ENCODE measurements at regions of chr1 and their contacts with region 1.

Region 1: DNA sequence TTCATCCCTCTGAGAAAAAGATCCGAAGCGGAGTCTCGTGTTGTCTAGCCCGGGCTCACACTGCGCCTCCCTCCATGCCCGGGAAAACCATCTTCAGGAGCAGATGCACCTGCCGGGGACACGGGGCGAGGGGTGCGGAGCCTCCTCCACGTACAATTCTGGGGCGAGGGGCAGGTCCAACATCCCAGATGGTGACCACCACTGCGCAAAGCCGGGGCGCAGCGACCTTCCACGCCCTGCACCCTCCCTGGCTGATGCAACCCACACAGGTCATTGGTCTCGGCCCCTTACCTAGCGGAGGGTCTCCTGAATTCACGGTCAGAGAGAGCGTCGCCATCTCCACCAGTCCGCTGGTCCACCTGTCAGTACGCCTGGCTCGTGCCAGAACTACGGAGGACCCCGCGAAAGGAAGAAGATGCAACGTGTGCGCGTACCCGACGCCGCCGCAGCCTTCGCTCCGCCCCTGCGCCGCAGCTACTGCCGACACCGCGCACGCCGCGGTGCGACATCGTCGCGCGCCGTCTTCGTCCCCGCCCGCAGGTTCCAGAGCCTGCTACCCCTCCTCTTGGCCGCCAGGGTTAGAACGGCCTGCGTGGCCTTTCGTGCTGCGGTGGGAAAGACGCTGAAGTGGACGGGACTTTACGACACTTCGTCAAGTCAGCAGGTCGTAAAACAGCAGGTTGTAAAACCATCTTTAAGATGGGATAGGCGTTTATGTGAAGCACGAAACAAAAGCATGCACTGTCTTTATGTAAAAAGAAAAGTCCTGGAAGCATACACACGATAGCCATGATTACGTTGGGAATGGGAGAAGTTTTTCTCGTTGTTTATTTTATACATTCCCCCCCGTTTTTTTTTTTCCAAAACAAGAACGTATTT is at the start of gene EPRS1:
- DNase-seq: peak; percentile 94 to 95
- H3K4me3 ChIP-seq: peak within 1 kb of the TSS; percentile 61 to 91 (median 79)
- H3K27ac ChIP-seq: peak within 1 kb of the TSS; percentile 63 to 78 (median 73)
- H3K4me1 ChIP-seq: peaks cover 4 to 13% of the 10 kb centered on the region in 2 donors
- H3K27me3 ChIP-seq: no peaks in the 10 kb centered on the region
- CTCF ChIP-seq: peak; percentile 71 to 93 (median 79)
- POLR2A ChIP-seq: peak in 1 of 2 donors; percentile 84
- total RNA-seq, gene EPRS1: 43.7 to 63.1 (median 54.8) TPM

Region 2: DNA sequence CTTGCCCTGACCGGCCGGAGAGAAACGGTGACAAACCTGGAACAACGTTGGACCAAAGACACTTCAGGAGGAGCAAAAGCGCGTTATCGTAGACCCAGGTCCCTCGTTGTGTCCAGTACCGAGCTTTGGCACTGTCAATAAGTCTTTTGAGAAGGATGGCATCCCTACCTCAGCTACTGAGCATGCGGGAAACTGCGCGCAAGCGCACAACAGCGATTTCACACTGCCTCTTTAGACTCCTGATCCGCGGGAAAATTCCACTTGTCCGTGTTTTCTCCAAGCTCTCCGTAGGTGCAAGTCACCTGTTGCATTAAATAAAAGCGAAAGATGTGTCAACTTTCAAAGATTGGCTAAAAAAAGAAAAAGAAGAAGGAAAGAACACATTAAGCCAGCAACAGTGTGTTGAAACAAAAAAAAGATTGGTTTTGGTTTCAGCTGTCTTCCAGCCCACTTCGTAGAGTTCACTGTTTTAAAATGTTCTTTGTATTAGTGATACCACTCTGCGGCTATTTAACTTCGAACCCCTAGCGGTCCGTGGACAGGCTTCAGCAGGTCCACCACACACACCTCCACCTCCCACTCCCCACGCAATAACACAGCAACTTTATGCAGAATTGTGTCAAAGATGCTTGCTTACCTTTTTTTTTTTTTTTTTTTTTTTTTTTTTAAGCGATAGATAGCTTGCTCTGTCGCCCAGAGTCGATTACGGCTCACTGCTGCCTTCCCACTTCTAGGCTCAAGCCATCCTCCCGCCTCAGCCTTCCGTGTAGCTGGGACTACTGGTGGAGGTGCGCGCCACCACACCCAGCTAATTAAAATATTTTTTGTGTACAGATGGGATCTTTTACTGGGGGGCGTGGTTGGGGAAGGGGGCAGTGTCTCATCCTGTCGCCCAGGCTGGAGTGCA is 43.6 kb after region 1 on chr1 and contains the start of gene BPNT1:
- intact Hi-C with region 1: loop called (anchors 10 kb)
- DNase-seq: peak; percentile 96 to 98
- H3K4me3 ChIP-seq: peak within 1 kb of the TSS; percentile 18 to 42 (median 29)
- H3K27ac ChIP-seq: peak within 1 kb of the TSS in 2 of 3 donors; percentile 53 to 57
- H3K4me1 ChIP-seq: peaks cover 3 to 5% of the 10 kb centered on the region in 2 donors
- H3K27me3 ChIP-seq: no peaks in the 10 kb centered on the region
- CTCF ChIP-seq: no peak
- POLR2A ChIP-seq: peak in 1 of 2 donors; percentile 82
- total RNA-seq, gene BPNT1: 24.8 to 29.3 (median 25.1) TPM